GM13977 (cell line): ENCODE measurements at regions of chr3 and their contacts with region 1.

Region 1: DNA sequence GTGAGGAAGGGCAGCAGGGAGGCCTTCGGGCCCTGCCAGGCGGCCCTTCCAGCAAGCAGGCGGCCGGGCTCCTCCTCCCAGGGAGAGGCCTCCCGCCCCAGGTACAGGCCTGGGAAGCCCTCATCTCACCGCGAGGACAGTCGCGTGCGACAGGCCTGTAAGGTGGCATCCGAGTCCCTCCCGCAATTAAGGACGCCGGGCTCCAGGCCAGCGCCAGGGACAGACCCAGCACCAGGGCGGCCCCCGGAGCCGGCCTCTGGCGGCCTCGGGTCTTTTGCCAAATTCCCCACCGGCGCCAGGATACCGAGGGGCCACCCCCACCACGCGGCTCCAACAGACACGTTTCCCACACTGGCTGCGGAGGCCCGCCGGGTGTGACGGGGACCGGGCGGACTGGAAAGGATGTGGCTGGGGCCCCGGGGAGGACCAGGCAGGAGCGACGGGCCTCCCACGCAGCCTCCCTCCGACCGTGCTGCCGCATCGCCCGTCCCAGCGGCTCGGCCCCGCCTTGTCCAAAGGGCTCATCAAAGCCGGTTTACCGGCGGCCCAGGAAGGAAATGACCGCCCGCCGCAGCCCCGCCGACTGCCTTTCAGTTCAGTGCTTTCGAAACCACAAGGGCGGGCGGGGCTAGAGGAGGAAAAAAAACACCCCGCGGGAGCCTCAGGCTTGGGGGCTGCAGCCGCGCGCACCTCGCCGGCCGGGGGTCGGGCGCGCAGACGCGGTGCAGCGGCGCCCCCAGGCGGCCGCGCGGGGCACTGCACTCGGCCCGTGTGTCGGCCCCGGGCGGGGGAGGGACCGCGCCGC is 11.3 kb downstream of the XXYLT1 start:
- DNase-seq: peak; percentile 99
- CTCF ChIP-seq: peak; percentile 97

Region 2: GRCh38 chr3:195001961-195002861 is 257.5 kb before region 1 on chr3:
- in situ Hi-C with region 1: loop called (anchors 10 kb)
- DNase-seq: peak; percentile 70
- CTCF ChIP-seq: peak; percentile 64

Region 3: GRCh38 chr3:195154793-195155535 is 104.7 kb before region 1 on chr3:
- in situ Hi-C with region 1: loop called (anchors 10 kb)
- DNase-seq: peak; percentile 63
- CTCF ChIP-seq: no peak